Left ventricle myocardium inferior (tissue), 1 donor: ENCODE measurements at regions of chr15 and their contacts with region 1.

Region 1: DNA sequence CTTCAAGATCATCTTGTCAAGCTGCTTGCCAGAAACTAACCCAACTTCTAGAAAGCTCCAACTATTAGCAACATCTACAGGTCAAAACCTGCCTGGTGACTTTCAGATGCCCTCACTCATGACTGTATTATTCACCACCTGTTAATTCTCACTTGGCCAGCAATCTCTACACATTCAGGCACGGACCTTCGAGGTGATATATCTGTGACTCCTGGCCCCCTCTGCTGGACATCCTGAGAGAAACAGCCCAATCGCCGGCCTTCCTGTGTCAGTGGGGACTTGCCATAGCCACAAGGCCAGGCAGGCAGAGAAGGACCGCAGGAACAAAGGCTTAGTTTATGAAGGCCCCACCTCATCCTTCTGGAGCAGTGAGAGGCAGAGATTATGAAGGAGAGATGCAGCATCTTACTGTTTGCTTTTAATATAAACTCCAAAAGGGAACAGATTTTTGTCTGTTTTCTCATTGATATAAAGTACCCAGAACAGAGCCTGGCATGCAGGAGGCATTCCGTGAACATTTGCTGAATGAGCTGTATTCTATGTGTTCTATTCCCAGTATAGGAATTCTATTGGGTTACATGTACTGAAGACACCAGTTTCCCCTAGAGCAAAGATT is 24.4 kb upstream of the OCA2 start:
- DNase-seq: peak; percentile 45
- H3K4me3 ChIP-seq: no peak overlapping the region
- H3K27ac ChIP-seq: no peak overlapping the region
- H3K4me1 ChIP-seq: peaks cover 16% of the 10 kb centered on the region
- H3K27me3 ChIP-seq: no peaks in the 10 kb centered on the region
- CTCF ChIP-seq: peak; percentile 76

Region 2: GRCh38 chr15:28086175-28086703 is 37.3 kb before region 1 on chr15:
- intact Hi-C with region 1: loop called (anchors 5 kb)
- DNase-seq: no peak
- H3K4me3 ChIP-seq: no peak overlapping the region
- H3K27ac ChIP-seq: no peak overlapping the region
- H3K4me1 ChIP-seq: peaks cover 9% of the 10 kb centered on the region
- H3K27me3 ChIP-seq: peaks cover 13% of the 10 kb centered on the region
- CTCF ChIP-seq: peak; percentile 85

Region 3: GRCh38 chr15:28260722-28261121 is 137.2 kb after region 1 on chr15:
- intact Hi-C with region 1: no loop called
- DNase-seq: peak; percentile 52
- H3K4me3 ChIP-seq: no peak overlapping the region
- H3K27ac ChIP-seq: peak overlapping the region; percentile 57
- H3K4me1 ChIP-seq: peaks cover 21% of the 10 kb centered on the region
- H3K27me3 ChIP-seq: no peaks in the 10 kb centered on the region
- CTCF ChIP-seq: no peak